Calu3 (cell line): ENCODE measurements at regions of chr3 and their contacts with region 1.

Region 1: GRCh38 chr3:79872504-79873159 is 104.8 kb upstream of the ROBO1 start:
- DNase-seq: peak; percentile 4
- H3K4me3 Mint-ChIP-seq: no peak overlapping the region
- H3K27ac Mint-ChIP-seq: peak overlapping the region; percentile 77
- H3K4me1 Mint-ChIP-seq: peaks cover 35% of the 10 kb centered on the region
- H3K27me3 Mint-ChIP-seq: no peaks in the 10 kb centered on the region
- CTCF ChIP-seq: no peak

Region 2: GRCh38 chr3:80000039-80000438 is 127.4 kb after region 1 on chr3:
- CTCF ChIA-PET with region 1: no interaction called
- intact Hi-C with region 1: loop called (anchors 10 kb)
- DNase-seq: no peak
- H3K4me3 Mint-ChIP-seq: no peak overlapping the region
- H3K27ac Mint-ChIP-seq: peak overlapping the region; percentile 76
- H3K4me1 Mint-ChIP-seq: peaks cover 8% of the 10 kb centered on the region
- H3K27me3 Mint-ChIP-seq: no peaks in the 10 kb centered on the region
- CTCF ChIP-seq: no peak